Activated naive CD4-positive, alpha-beta T cell treated with anti-CD3 and anti-CD28 coated beads for 36 hours (primary cell): ENCODE measurements at regions of chr3 and their contacts with region 1.

Region 1: GRCh38 chr3:37779289-37780152 is 82.2 kb upstream of the CTDSPL start:
- DNase-seq: peak; percentile 37
- H3K4me3 Mint-ChIP-seq: no peak overlapping the region
- H3K27ac Mint-ChIP-seq: no peak overlapping the region
- H3K4me1 Mint-ChIP-seq: peaks cover 8% of the 10 kb centered on the region
- H3K27me3 Mint-ChIP-seq: no peaks in the 10 kb centered on the region

Region 2: DNA sequence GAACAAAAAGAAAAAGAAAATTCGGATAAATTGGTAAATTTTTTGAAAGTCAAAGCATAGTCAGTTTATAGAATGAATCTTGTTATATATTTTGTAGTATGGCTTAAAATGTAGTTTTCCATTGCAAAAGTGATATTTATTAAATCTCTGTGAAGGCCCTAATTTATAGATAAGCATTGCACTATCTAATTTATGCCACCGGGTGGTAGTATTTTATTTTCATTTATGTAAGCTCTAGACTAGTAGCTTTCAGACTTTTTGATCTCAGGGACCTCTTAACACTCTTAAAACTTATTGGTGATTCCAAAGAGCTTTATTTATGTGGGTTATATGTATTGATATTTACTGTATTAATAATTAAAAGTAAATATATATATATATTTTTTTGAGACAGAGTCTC is 471.3 kb before region 1 on chr3:
- CTCF ChIA-PET with region 1: interaction called, 3 read pairs
- intact Hi-C with region 1: loop called (anchors 2 kb)
- DNase-seq: no peak
- H3K4me3 Mint-ChIP-seq: no peak overlapping the region
- H3K27ac Mint-ChIP-seq: no peak overlapping the region
- H3K4me1 Mint-ChIP-seq: peaks cover 18% of the 10 kb centered on the region
- H3K27me3 Mint-ChIP-seq: no peaks in the 10 kb centered on the region

Region 3: DNA sequence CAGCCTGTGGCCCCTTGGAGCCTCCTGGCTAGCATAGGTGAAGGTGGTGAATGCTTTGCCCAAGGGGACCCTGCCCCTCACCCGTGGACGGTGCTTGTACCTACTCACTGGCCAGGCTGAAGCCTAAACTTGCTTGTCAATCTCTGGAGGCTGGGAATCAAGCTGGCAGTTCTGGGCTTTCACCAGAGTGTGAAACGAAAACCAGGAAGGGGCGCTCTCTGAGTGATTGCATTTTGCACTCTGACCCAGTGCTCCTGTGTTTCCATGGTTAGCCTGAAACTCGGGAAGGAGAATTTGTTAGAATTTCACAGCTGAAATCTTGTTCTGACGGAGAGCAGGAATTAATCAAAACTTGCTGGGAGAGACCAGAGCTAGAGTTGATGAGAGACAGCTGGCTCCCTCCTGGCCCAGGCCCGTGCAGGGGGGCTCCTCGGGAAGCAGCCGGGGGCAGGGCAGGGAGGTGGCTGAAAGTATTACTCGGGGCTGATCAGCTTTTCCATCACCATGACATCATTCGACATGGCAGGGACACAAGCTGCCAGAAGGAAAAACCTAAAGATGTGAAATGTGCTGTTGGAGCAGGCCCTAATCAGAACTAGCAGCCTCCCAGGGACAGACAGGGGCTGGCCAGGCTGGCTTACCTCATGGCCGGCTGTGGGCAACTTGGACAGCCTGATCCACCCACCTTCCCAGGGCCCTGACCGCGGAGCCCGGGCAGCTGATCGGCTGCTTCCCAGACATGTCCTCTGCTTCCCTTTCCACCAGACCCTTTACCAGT is 241.4 kb before region 1 on chr3:
- CTCF ChIA-PET with region 1: no interaction called
- intact Hi-C with region 1: loop called (anchors 10 kb)
- DNase-seq: no peak
- H3K4me3 Mint-ChIP-seq: no peak overlapping the region
- H3K27ac Mint-ChIP-seq: no peak overlapping the region
- H3K4me1 Mint-ChIP-seq: no peaks in the 10 kb centered on the region
- H3K27me3 Mint-ChIP-seq: peaks cover 1% of the 10 kb centered on the region

Region 4: DNA sequence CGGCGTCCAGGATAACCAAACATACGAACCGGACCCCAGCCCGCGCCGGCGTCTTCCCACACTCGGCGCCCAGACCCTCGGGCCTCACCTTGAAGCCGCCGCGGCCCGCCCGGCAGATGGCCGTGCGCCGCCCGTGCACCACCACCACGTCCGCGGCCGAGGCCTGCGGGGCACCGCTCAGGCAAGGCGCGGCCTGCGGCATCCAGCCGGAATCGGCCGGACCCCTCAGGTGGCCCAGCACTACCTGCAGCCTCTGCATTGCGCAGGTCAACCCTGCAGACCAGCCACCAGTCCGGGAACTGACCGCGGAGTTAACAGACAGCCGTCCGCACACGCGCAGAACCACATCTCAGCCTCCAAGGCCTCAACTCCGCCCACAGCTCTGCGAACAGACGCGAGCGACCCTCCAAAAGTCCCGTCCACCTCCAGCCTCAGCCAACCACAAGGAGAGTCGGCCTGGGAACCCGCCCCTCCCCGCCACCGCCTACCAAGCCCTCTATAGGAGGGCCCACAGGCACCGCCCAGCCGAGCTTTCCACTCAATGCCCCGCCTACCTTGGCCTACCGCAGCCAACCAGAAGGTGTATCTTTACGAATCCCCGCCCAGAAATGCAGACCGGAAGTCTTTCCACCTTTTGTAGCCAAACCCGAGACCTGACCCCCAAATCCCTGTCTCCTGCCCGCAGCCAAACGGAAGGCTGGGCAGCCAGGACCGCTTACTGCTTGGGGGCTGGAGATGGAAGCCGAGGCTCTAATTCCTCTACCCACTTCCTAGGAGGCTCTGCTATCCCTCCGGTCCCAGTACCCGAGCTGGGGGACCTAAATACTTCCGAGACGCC is 357.5 kb after region 1 on chr3 and contains the start of gene ACAA1:
- CTCF ChIA-PET with region 1: no interaction called
- intact Hi-C with region 1: no loop called
- DNase-seq: peak; percentile 99
- H3K4me3 Mint-ChIP-seq: peak within 1 kb of the TSS; percentile 88
- H3K27ac Mint-ChIP-seq: peak within 1 kb of the TSS; percentile 99
- H3K4me1 Mint-ChIP-seq: peaks cover 53% of the 10 kb centered on the region
- H3K27me3 Mint-ChIP-seq: no peaks in the 10 kb centered on the region
- total RNA-seq, gene ACAA1: 57.5 to 58.7 TPM